Dendritic cell treated with granulocyte-macrophage colony-stimulating factor and Interleukin-4, amounts not matched to agents 40 ng/mL and 50 ng/mL, for 4 days (primary cell): ENCODE measurements at regions of chr17 and their contacts with region 1.

Region 1: DNA sequence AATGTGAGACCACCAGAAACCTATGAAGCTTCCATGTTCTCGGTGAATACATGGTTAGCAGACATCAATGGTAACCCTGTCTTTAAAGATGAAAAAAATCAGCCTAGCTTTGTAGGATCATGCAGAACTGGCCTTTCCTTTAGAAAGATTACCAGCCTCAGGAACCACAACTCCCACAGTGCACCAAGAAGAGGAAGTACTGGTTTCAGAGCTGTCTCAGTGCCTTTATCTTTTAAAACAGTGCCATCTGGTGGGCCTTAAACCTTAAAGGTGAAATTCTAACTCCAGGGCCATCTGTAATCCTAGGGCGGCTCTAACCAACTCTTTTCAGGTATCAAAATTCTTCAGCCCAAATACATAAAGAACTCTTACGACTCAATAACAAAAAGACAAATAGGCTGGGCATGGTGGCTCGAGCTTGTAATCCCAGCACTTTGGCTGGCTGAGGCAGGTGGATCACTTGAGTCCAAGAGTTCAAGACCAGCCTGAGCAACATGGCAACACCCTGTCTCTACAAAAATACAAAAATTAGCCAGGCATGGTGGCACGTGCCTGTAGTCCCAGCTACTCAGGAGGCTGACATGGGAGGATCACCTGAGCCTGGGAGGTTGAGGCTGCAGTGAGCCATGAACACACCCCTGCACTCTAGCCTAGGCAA is 5.4 kb downstream of the ATPAF2 start:
- H3K4me3 Mint-ChIP-seq: no peak overlapping the region
- H3K27ac Mint-ChIP-seq: peak overlapping the region; percentile 32
- H3K4me1 Mint-ChIP-seq: peaks cover 42% of the 10 kb centered on the region
- H3K27me3 Mint-ChIP-seq: no peaks in the 10 kb centered on the region

Region 2: DNA sequence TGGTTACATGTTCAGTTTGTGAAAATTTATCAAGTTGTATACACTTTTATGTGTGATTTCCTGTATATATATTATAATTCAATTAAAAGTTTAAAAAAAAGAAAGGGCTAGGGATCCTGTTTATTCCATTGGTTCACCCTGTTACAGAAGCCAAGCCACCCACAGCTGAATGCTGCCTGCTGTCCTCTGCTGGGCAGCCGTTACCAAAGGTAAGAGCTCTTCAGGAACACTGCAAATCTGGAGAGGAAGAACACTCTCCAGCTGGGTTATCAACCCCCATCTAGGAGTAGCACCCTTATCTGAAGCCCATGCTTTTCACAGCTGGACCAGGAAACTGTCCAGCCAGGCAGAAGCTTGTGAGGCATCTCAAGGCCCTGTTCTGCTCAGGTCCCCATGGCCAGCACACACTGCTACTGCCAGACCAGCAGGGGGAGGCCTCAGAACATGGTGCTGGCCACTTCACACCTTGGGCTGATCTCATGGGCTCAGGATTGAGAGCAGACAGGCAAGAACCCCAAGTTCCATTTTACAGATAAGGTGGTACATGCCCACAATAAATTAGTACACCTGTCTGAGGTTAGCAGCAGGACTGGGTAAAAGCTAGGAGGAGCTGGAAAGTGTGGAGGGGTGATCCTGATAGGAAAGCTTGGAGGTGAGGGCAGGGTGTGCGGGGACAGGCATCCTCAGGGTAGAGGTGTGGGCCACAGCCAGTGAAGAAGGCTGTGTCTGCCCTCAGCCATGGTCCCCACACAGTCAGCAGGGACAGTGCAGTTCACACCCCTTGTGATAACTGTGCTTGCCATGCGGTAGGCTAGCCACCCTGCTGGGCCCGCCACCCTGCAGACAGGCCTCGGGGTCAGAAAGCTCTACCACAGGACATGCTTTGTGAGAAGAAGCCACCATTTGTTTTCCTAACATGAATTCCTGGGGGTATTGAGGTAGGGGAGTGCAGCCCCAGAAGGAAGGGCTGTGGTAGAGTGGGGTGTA is 142.5 kb before region 1 on chr17:
- intact Hi-C with region 1: loop called (anchors 1 kb)
- H3K4me3 Mint-ChIP-seq: no peak overlapping the region
- H3K27ac Mint-ChIP-seq: no peak overlapping the region
- H3K4me1 Mint-ChIP-seq: no peaks in the 10 kb centered on the region
- H3K27me3 Mint-ChIP-seq: no peaks in the 10 kb centered on the region

Region 3: GRCh38 chr17:17972126-17972951 is 61.2 kb before region 1 on chr17 and contains the starts of genes DRC3 and TOM1L2:
- intact Hi-C with region 1: loop called (anchors 2 kb)
- H3K4me3 Mint-ChIP-seq: peak within 1 kb of the TSS; percentile 92
- H3K27ac Mint-ChIP-seq: peak within 1 kb of the TSS; percentile 93
- H3K4me1 Mint-ChIP-seq: peaks cover 52% of the 10 kb centered on the region
- H3K27me3 Mint-ChIP-seq: no peaks in the 10 kb centered on the region

Region 4: GRCh38 chr17:18225121-18225566 is 191.6 kb after region 1 on chr17:
- intact Hi-C with region 1: no loop called
- H3K4me3 Mint-ChIP-seq: peak overlapping the region; percentile 67
- H3K27ac Mint-ChIP-seq: peak overlapping the region; percentile 45
- H3K4me1 Mint-ChIP-seq: peaks cover 37% of the 10 kb centered on the region
- H3K27me3 Mint-ChIP-seq: peaks cover 5% of the 10 kb centered on the region